ENCODE measurements at regions of chr1 and their contacts with region 1.

Region 1: DNA sequence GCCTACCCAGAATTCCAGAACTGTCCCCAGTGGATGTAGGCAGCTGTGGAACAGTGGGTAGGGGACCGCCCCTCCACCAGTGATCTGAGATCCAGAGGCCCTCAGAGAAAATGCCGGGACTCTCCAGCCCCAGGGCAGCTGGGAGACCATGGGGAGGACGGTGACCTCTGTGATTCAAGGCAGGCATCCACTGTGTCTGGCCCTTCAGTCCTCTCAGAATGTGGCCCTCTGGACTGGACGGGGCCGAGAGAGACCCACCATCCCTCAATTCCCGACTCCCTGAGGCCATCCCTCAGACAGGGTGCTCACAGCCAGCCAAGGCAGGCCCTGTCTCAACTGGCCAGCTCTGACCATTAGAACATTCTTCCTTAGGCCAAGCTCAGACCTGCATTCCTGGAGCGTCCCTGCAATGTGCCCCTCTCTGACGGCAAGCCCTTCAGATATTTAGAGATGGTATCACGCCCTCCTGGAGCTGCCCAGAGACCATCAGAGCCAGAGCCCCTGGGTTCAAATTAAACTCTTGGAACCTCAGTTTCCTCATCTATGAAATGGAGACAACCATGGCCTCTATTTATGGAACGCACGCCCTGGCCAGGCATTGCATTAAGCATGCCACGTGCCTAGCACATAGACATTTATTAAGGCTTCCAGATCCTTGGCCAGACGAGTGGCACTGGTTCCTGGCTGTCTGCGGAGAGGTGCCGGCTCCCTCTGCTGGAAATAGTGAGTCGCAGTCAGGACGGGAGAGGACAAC is 9.6 kb upstream of the EPS8L3 start:
- DNase-seq: peak; percentile 76 to 82
- H3K4me3 ChIP-seq: no peak overlapping the region
- H3K4me3 Mint-ChIP-seq: no peak overlapping the region
- H3K27ac Mint-ChIP-seq: no peak overlapping the region
- H3K4me1 ChIP-seq: no peaks in the 10 kb centered on the region; the same call in 1 of the 2 replicates
- H3K4me1 Mint-ChIP-seq: no peaks in the 10 kb centered on the region
- H3K27me3 ChIP-seq: no peaks in the 10 kb centered on the region
- H3K27me3 Mint-ChIP-seq: no peaks in the 10 kb centered on the region
- CTCF ChIP-seq: peak; percentile 48 to 75

Region 2: DNA sequence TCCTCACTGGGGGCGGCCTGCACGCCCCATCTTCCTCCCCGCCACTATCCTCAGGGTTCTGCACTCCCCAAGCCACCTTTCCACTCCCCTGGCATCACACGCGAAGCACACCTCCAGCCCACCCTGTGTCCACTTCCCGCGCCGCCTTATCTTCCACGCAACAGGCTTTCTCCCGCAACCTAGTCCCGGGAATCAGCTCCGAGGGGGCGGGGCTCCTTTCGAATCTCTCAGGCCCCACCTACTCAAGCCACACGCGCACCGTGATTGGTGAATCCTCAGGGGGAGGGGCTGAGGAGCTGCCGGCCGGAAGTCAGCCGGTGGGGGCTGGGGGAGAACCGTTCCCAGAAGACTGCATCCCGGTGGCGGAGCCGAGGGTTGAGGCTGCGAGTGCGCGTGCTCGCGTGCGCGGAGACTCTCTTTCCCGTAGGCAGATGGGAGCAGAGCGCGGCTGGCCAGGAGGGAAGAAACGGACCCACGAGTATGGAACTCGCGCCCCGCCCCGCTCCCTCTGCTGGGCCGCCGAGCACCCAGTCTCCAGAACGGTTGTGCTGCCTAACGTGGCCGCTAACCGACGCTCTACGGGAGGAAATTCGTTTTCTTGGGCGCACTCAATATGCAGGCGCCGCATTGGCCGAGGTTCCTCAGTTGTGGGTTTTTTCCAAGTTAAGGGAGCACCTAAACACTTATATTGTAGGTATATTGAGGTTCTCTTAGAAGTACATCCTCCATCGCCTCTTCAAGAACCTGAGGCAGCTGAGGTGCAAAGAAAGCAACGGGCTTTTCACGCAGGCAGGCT is 490.2 kb before region 1 on chr1 and contains the start of gene PSRC1:
- CTCF ChIA-PET with region 1: no interaction called
- POLR2A ChIA-PET with region 1: no interaction called
- intact Hi-C with region 1: no loop called
- DNase-seq: peak; percentile 94 to 95
- H3K4me3 ChIP-seq: peak within 1 kb of the TSS; percentile 61
- H3K4me3 Mint-ChIP-seq: peak within 1 kb of the TSS; percentile 93
- H3K27ac Mint-ChIP-seq: peak within 1 kb of the TSS; percentile 84
- H3K4me1 ChIP-seq: peaks cover 5% of the 10 kb centered on the region; the same call in 1 of the 2 replicates
- H3K4me1 Mint-ChIP-seq: no peaks in the 10 kb centered on the region
- H3K27me3 ChIP-seq: no peaks in the 10 kb centered on the region
- H3K27me3 Mint-ChIP-seq: no peaks in the 10 kb centered on the region
- CTCF ChIP-seq: no peak
- total RNA-seq, gene PSRC1: 23.9 and 24.9 TPM in 2 replicates

Region 3: DNA sequence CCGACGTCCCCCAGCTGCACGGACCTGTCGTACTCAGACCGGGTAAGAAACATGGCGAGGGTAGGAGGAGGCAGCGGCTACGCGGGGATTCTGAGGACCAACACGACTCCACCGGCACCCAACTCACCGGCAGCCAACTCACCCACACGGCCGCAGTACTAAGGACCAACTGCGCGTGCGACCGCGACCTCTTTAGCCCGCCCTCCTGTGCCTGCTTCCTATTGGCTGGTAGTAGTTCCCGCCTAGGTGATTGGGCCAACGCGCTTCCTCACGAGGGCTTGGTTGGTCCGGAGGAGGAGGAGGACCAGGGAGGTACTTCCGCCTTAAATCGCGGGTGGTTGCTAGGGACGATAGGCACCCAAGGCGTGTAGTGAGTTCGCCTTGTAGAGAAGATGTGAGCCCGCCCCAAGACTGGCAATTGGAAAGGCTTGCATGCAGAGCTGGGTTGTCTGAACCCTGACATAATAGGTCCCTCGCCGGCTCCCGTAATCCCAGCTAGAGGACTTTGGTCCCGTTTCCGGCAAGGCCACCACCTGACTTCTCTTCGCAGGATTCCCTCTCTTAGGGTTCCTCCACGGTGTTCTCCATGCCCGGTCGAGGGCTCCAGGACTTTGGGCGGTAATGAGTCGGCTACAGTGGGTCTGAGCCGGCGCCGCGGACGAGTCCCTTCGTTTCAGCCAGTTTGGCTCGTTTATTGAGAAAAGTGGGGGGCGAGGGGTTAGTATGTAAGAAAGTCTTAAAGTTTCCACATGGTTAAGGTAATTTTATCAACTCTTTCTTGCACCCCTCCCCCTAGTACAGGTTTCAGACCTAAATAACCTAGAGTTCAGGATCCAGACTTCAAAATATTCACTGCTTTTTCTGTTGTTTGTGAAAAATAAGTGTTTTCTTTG is 346.8 kb before region 1 on chr1 and contains the start of gene PSMA5:
- CTCF ChIA-PET with region 1: no interaction called
- POLR2A ChIA-PET with region 1: no interaction called
- intact Hi-C with region 1: no loop called
- DNase-seq: peak; percentile 92 to 98
- H3K4me3 ChIP-seq: peak within 1 kb of the TSS; percentile 61
- H3K4me3 Mint-ChIP-seq: peak within 1 kb of the TSS; percentile 90
- H3K27ac Mint-ChIP-seq: peak within 1 kb of the TSS; percentile 95
- H3K4me1 ChIP-seq: peaks cover 14% of the 10 kb centered on the region
- H3K4me1 Mint-ChIP-seq: peaks cover 14% of the 10 kb centered on the region
- H3K27me3 ChIP-seq: no peaks in the 10 kb centered on the region
- H3K27me3 Mint-ChIP-seq: no peaks in the 10 kb centered on the region
- CTCF ChIP-seq: no peak
- total RNA-seq, gene PSMA5: 82.7 and 97.8 TPM in 2 replicates

Region 4: GRCh38 chr1:109643385-109644230 is 129.7 kb before region 1 on chr1:
- CTCF ChIA-PET with region 1: interaction called, 17 read pairs
- POLR2A ChIA-PET with region 1: no interaction called
- intact Hi-C with region 1: loop called (anchors 5 kb)
- DNase-seq: peak; percentile 76 to 81
- H3K4me3 ChIP-seq: no peak overlapping the region
- H3K4me3 Mint-ChIP-seq: no peak overlapping the region
- H3K27ac Mint-ChIP-seq: no peak overlapping the region
- H3K4me1 ChIP-seq: no peaks in the 10 kb centered on the region
- H3K4me1 Mint-ChIP-seq: no peaks in the 10 kb centered on the region
- H3K27me3 ChIP-seq: no peaks in the 10 kb centered on the region
- H3K27me3 Mint-ChIP-seq: no peaks in the 10 kb centered on the region
- CTCF ChIP-seq: peak; percentile 63 to 72

Region 5: DNA sequence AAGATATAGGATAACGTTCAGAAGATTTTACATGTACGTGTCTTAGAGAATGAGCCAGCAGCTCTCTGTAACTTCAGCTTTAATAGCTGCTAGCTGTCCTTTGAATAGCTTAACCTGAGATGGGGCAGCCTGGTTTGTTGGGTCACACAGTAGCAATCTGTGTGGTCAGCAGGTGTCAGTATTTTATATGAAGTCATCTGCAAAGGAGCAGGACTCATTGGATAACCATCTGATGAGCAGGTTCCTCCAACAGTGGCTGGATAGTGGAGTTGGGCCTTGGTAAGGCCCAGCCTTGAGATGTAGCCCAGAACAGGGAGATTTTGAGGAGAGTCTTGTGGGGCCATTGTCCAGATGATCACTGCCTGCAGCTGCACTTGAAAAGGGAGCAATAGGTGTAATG is 54.8 kb before region 1 on chr1:
- CTCF ChIA-PET with region 1: interaction called, 26 read pairs
- POLR2A ChIA-PET with region 1: no interaction called
- intact Hi-C with region 1: loop called (anchors 1 kb)
- DNase-seq: peak; percentile 40 to 52
- H3K4me3 ChIP-seq: no peak overlapping the region
- H3K4me3 Mint-ChIP-seq: no peak overlapping the region
- H3K27ac Mint-ChIP-seq: no peak overlapping the region
- H3K4me1 ChIP-seq: peaks cover 9% of the 10 kb centered on the region
- H3K4me1 Mint-ChIP-seq: peaks cover 7% of the 10 kb centered on the region
- H3K27me3 ChIP-seq: no peaks in the 10 kb centered on the region
- H3K27me3 Mint-ChIP-seq: no peaks in the 10 kb centered on the region
- CTCF ChIP-seq: peak in 1 of 2 experiments; percentile 36

Region 6: GRCh38 chr1:109910123-109910962 is 137.0 kb after region 1 on chr1 and contains the start of gene CSF1:
- CTCF ChIA-PET with region 1: no interaction called
- POLR2A ChIA-PET with region 1: no interaction called
- intact Hi-C with region 1: loop called (anchors 10 kb)
- DNase-seq: peak; percentile 41 to 47
- H3K4me3 ChIP-seq: peak within 1 kb of the TSS; percentile 42
- H3K4me3 Mint-ChIP-seq: peak within 1 kb of the TSS; percentile 90
- H3K27ac Mint-ChIP-seq: peak within 1 kb of the TSS; percentile 66
- H3K4me1 ChIP-seq: peaks cover 4% of the 10 kb centered on the region
- H3K4me1 Mint-ChIP-seq: peaks cover 7% of the 10 kb centered on the region
- H3K27me3 ChIP-seq: no peaks in the 10 kb centered on the region
- H3K27me3 Mint-ChIP-seq: no peaks in the 10 kb centered on the region
- CTCF ChIP-seq: no peak
- total RNA-seq, gene CSF1: 3.7 and 3.9 TPM in 2 replicates

Region 7: DNA sequence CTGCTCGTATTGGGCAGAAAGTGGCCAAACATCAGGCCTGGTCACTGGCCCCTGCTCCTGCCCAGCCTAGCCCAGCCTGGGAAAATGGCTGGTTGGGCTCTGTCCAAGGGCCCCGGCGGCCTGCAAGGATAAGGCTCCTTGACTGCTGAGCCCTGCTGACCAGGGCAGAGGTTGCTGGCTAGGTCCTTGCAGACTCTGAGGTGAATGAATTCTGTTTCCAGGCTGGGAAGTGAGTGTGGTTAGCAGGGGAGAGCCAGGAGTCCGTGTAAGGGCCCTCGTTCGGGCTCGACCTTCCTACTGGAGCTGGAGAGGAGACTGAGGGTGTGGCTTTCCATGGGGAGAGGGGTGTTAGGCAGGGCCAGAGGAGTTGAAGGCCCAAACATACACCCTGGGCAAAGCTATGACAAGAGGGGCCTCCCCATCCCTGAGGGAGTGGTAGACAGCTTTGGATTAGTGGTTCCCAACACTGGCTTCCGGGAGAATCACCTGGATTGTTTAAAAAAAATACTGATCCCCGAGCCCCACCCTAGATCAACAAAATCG is 157.9 kb after region 1 on chr1:
- CTCF ChIA-PET with region 1: no interaction called
- POLR2A ChIA-PET with region 1: no interaction called
- intact Hi-C with region 1: no loop called
- DNase-seq: peak; percentile 83 to 90
- H3K4me3 ChIP-seq: no peak overlapping the region
- H3K4me3 Mint-ChIP-seq: peak overlapping the region; percentile 14
- H3K27ac Mint-ChIP-seq: peak overlapping the region; percentile 83
- H3K4me1 ChIP-seq: peaks cover 57% of the 10 kb centered on the region
- H3K4me1 Mint-ChIP-seq: peaks cover 23% of the 10 kb centered on the region
- H3K27me3 ChIP-seq: no peaks in the 10 kb centered on the region
- H3K27me3 Mint-ChIP-seq: no peaks in the 10 kb centered on the region
- CTCF ChIP-seq: no peak

Measured in Caco-2 (cell line).